ENCODE measurements at regions of chr18 and their contacts with region 1.

Region 1: GRCh38 chr18:5841518-5841917 is 53.8 kb downstream of the TMEM200C start:
- DNase-seq: no peak

Region 2: GRCh38 chr18:5424903-5425664 is 416.4 kb before region 1 on chr18:
- intact Hi-C with region 1: no loop called
- DNase-seq: peak in 8 of 42 donors; percentile 25 to 59 (median 38)

Region 3: GRCh38 chr18:5600378-5601071 is 241.0 kb before region 1 on chr18:
- intact Hi-C with region 1: loop called (anchors 10 kb)
- DNase-seq: no peak

Region 4: GRCh38 chr18:5779922-5780321 is 61.6 kb before region 1 on chr18:
- intact Hi-C with region 1: no loop called
- DNase-seq: no peak

Region 5: GRCh38 chr18:5972298-5972697 is 130.8 kb after region 1 on chr18:
- intact Hi-C with region 1: no loop called
- DNase-seq: peak in 2 of 42 donors; percentile 4 to 22

Measured in head of caudate nucleus (tissue), 42 donors.